GM10248 (cell line): ENCODE measurements at regions of chr7 and their contacts with region 1.

Region 1: GRCh38 chr7:149195180-149196150 is at the start of gene ZNF282:
- DNase-seq: peak; percentile 94
- CTCF ChIP-seq: peak; percentile 68

Region 2: DNA sequence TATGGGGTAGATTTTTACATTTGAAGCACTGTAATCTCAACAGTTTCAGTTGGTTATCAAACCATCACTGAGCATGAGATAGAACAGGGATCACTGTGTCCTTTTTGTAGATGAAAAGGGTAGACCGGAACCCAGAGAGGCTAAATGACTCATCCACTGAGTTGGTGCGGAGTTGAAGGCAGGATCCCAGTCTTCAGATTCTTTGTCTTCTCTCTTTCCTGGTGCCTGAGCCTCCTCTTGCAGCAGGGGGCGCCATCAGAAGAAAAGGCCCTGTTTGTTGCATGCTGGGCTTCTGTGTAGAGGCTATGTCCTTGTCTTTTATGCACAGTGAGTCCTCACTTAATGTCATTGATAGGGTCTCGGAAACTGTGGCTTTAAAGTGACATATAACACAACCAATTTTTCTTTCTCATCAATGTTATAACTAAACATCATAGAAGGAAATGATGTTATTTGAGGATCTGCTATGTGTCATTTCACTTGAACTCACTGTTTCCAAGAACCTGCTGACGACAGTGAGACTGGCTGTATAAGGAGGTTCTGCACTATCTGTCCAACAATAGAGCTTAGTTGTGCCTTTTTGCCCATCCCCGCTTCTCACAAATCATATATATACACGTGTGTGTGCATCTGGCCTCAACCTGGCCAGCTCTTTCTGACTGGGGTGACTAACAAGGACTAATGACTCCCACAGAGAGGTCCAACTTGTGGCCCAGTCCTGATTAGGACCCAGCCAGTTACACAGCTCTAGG is 14.2 kb after region 1 on chr7:
- CTCF ChIA-PET with region 1: interaction called, 15 read pairs
- POLR2A ChIA-PET with region 1: interaction called, 4 read pairs
- DNase-seq: peak; percentile 70
- CTCF ChIP-seq: peak; percentile 58

Region 3: DNA sequence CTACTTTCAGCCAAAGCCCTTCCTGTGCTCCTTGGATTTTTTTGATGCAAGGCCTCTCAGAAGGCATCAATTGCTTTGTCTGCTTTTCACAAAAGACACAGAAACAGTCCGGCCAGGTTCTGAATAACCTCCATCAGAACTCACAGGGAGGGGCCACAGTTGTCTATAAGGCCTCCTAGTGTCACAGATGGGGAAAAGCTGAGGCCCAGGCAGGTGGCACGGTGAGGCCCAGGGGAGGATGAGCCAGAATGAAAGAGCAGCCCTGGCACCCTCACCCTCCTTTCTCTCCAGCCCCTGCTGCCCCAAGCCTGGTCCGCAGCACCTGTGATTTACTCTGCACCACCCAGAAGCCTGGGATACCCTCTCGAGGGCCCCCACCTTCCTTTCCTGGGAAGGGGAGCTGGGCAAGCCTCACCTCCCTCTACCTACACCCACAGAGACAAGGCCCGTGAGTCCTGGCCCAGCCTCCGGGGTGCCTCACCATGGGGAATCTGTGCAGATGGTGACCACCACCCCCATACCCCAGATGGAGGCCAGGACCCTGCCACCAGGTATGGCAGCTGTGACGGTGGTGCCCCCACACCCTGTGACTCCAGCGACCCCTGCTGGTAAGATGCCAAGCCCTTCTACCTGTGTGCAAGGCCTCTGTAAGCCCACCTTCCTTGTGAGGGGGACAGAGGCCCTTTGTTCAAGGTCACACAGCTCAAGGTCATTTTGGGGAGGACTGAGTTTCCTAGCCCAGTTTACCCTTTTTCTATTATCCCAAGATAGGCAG is 604.1 kb after region 1 on chr7:
- CTCF ChIA-PET with region 1: no interaction called
- POLR2A ChIA-PET with region 1: no interaction called
- DNase-seq: peak; percentile 74
- CTCF ChIP-seq: peak; percentile 63